ENCODE measurements at regions of chr9 and their contacts with region 1.

Region 1: GRCh38 chr9:87198716-87199115 is 251.4 kb upstream of the GAS1 start:
- DNase-seq: no peak
- ATAC-seq: peak; percentile 69
- H3K4me3 ChIP-seq: no peak overlapping the region
- H3K27ac ChIP-seq: peak overlapping the region; percentile 20 to 39
- H3K4me1 ChIP-seq: peaks cover 3 to 7% of the 10 kb centered on the region in 2 donors
- H3K27me3 ChIP-seq: no peaks in the 10 kb centered on the region

Region 2: DNA sequence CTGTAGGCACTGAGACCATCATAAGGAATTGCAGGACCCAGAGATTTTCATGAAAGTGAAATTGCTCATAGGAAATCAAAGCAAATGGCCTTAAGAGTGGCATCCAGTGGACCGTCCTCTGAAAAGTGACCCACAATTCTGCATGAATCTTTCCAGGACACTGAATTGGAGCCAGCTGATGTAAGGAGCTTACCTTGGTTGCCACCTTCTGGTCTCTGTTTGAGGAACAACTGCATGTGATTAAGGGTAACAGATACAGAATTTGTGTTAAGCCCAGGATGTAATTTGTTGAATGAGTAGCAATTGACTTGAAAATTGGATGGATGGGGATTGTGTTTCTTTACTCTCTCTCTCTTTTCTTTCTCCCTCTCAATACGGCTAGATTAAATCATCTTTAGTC is 201.6 kb before region 1 on chr9:
- intact Hi-C with region 1: no loop called
- DNase-seq: no peak
- ATAC-seq: no peak
- H3K4me3 ChIP-seq: no peak overlapping the region
- H3K27ac ChIP-seq: no peak overlapping the region
- H3K4me1 ChIP-seq: no peaks in the 10 kb centered on the region
- H3K27me3 ChIP-seq: no peaks in the 10 kb centered on the region

Region 3: DNA sequence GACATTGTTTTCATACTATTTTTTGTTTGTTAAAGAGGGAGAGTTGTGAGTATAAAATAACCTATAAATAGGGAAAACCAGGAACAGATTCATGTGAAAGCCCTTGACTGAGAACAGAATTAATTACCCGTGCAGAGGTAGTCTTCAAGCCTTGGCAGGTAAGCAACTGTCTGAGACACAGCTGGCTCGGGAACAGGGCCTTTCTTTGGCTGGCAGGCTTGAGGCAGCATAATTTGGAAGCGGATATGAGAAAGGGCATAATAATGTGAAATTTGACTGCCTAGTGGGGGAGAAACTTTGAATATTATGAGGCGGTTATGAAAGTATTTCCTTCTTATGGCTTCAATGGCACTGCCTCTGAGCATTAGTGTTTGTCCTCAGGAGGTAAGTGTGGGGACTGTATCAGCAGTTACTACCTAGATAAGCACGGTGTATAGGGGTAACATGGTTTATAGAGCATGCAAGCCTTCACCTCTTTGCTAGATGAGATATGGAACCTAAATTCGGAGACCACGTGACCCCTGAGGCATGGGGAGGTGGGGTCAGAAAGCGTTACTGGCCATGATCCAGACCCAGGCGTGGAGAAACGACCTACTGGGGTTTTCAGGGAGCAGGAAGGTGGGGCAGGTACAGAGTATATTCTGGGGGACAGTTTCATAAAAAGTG is 41.2 kb before region 1 on chr9:
- intact Hi-C with region 1: loop called (anchors 2 to 5 kb)
- DNase-seq: no peak
- ATAC-seq: no peak
- H3K4me3 ChIP-seq: no peak overlapping the region
- H3K27ac ChIP-seq: peak overlapping the region in 1 of 2 donors; percentile 55
- H3K4me1 ChIP-seq: peaks cover 0 to 4% of the 10 kb centered on the region in 2 donors
- H3K27me3 ChIP-seq: no peaks in the 10 kb centered on the region

Region 4: GRCh38 chr9:87179573-87180340 is 19.0 kb before region 1 on chr9:
- intact Hi-C with region 1: no loop called
- DNase-seq: no peak
- ATAC-seq: no peak
- H3K4me3 ChIP-seq: no peak overlapping the region
- H3K27ac ChIP-seq: no peak overlapping the region
- H3K4me1 ChIP-seq: no peaks in the 10 kb centered on the region
- H3K27me3 ChIP-seq: no peaks in the 10 kb centered on the region

Region 5: GRCh38 chr9:87280421-87280820 is 81.7 kb after region 1 on chr9:
- intact Hi-C with region 1: loop called in 1 of 2 experiments (anchors 5 kb)
- DNase-seq: no peak
- ATAC-seq: no peak
- H3K4me3 ChIP-seq: no peak overlapping the region
- H3K27ac ChIP-seq: no peak overlapping the region
- H3K4me1 ChIP-seq: peaks cover 5 to 10% of the 10 kb centered on the region in 2 donors
- H3K27me3 ChIP-seq: no peaks in the 10 kb centered on the region

Region 6: GRCh38 chr9:87834357-87834756 is 635.6 kb after region 1 on chr9:
- intact Hi-C with region 1: no loop called
- DNase-seq: no peak
- ATAC-seq: no peak
- H3K4me3 ChIP-seq: no peak overlapping the region
- H3K27ac ChIP-seq: no peak overlapping the region
- H3K4me1 ChIP-seq: peaks cover 0 to 2% of the 10 kb centered on the region in 2 donors
- H3K27me3 ChIP-seq: no peaks in the 10 kb centered on the region